ENCODE measurements at regions of chr5 and their contacts with region 1.

Region 1: DNA sequence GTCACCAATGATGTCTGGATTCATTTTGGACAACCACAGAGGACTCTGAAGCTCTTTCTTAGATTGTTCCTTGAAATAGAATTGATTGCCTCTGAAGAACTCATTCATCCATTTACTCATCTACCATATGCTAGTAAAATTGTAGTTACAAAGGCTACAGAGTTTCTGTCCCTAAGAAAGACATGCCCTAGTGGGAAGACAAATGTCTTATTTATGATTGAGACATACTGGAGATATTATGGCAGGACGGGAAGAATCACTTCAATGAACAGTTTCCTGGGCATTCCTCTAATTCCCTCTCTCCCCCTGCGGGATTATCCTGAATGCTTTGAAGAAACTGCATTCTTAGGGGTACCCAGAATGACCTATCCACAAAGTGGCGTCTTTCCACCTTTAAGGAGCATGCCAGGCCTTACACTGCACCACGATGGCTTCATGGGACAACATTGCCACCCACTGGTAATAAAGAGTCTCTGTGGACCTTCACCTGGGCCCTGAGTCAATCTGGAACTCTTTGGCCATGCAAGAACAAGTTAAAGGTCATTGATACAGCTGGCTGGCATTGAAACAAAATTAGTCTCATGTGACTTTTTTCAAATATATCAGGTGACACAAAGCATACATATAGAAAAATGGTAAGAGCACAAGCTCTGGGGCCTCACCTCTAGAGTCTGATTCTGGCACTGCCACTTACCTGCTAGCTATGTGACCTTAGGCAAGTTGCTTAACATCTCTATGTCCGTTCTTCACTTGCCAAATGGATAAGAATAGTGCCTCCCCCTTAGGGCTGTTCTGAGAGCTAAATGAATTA is 32.1 kb downstream of the ANKRD55 start:
- DNase-seq: peak; percentile 78
- ATAC-seq: peak; percentile 91
- H3K4me3 ChIP-seq: no peak overlapping the region
- H3K27ac ChIP-seq: no peak overlapping the region
- H3K4me1 ChIP-seq: peaks cover 2% of the 10 kb centered on the region; the same call in 1 of the 2 replicates
- H3K27me3 ChIP-seq: no peaks in the 10 kb centered on the region
- CTCF ChIP-seq: peak; percentile 83
- POLR2A ChIP-seq: no peak
- RAD21 ChIP-seq: peak; percentile 98

Region 2: GRCh38 chr5:55711968-55712859 is 488.8 kb before region 1 on chr5 and contains the start of gene SLC38A9:
- CTCF ChIA-PET with region 1: no interaction called
- POLR2A ChIA-PET with region 1: no interaction called
- dilution Hi-C with region 1: no loop called
- in situ Hi-C with region 1: no loop called
- intact Hi-C with region 1: loop called (anchors 10 kb)
- DNase-seq: peak; percentile 91
- ATAC-seq: peak; percentile 100
- H3K4me3 ChIP-seq: peak within 1 kb of the TSS; percentile 82
- H3K27ac ChIP-seq: peak within 1 kb of the TSS; percentile 81
- H3K4me1 ChIP-seq: peaks cover 2% of the 10 kb centered on the region; the same call in 1 of the 2 replicates
- H3K27me3 ChIP-seq: no peaks in the 10 kb centered on the region
- CTCF ChIP-seq: no peak
- POLR2A ChIP-seq: no peak
- RAD21 ChIP-seq: no peak; the same call in 1 of the 2 replicates
- total RNA-seq, gene SLC38A9: 20.8 and 24.2 TPM in 2 replicates

Region 3: GRCh38 chr5:55821731-55822512 is 379.1 kb before region 1 on chr5:
- CTCF ChIA-PET with region 1: no interaction called
- POLR2A ChIA-PET with region 1: no interaction called
- dilution Hi-C with region 1: no loop called
- in situ Hi-C with region 1: no loop called
- intact Hi-C with region 1: no loop called
- DNase-seq: no peak
- ATAC-seq: peak; percentile 35
- H3K4me3 ChIP-seq: no peak overlapping the region
- H3K27ac ChIP-seq: no peak overlapping the region
- H3K4me1 ChIP-seq: no peaks in the 10 kb centered on the region
- H3K27me3 ChIP-seq: peaks cover 28% of the 10 kb centered on the region
- CTCF ChIP-seq: no peak
- POLR2A ChIP-seq: no peak
- RAD21 ChIP-seq: no peak

Region 4: GRCh38 chr5:55982957-55983381 is 218.1 kb before region 1 on chr5:
- CTCF ChIA-PET with region 1: interaction called, 3 read pairs
- POLR2A ChIA-PET with region 1: no interaction called
- dilution Hi-C with region 1: no loop called
- in situ Hi-C with region 1: no loop called
- intact Hi-C with region 1: loop called (anchors 2 kb)
- DNase-seq: no peak
- ATAC-seq: no peak
- H3K4me3 ChIP-seq: no peak overlapping the region
- H3K27ac ChIP-seq: peak overlapping the region; percentile 29; the same call in 1 of the 2 replicates
- H3K4me1 ChIP-seq: peaks cover 6% of the 10 kb centered on the region
- H3K27me3 ChIP-seq: no peaks in the 10 kb centered on the region
- CTCF ChIP-seq: no peak
- POLR2A ChIP-seq: no peak
- RAD21 ChIP-seq: peak; percentile 29; the same call in 1 of the 2 replicates

Region 5: GRCh38 chr5:56123531-56124243 is 77.4 kb before region 1 on chr5:
- CTCF ChIA-PET with region 1: interaction called, 3 read pairs
- POLR2A ChIA-PET with region 1: no interaction called
- dilution Hi-C with region 1: no loop called
- in situ Hi-C with region 1: no loop called
- intact Hi-C with region 1: loop called (anchors 1 kb)
- DNase-seq: peak; percentile 100
- ATAC-seq: peak; percentile 90
- H3K4me3 ChIP-seq: no peak overlapping the region
- H3K27ac ChIP-seq: peak overlapping the region; percentile 65; the same call in 1 of the 2 replicates
- H3K4me1 ChIP-seq: peaks cover 16% of the 10 kb centered on the region
- H3K27me3 ChIP-seq: no peaks in the 10 kb centered on the region
- CTCF ChIP-seq: no peak
- POLR2A ChIP-seq: no peak
- RAD21 ChIP-seq: peak; percentile 25

Region 6: GRCh38 chr5:56829137-56829908 is 628.3 kb after region 1 on chr5:
- CTCF ChIA-PET with region 1: interaction called, 12 read pairs
- POLR2A ChIA-PET with region 1: no interaction called
- dilution Hi-C with region 1: no loop called
- in situ Hi-C with region 1: no loop called
- intact Hi-C with region 1: no loop called
- DNase-seq: peak; percentile 52
- ATAC-seq: no peak
- H3K4me3 ChIP-seq: no peak overlapping the region
- H3K27ac ChIP-seq: no peak overlapping the region
- H3K4me1 ChIP-seq: peaks cover 18% of the 10 kb centered on the region
- H3K27me3 ChIP-seq: no peaks in the 10 kb centered on the region
- CTCF ChIP-seq: no peak
- POLR2A ChIP-seq: no peak
- RAD21 ChIP-seq: no peak

Measured in IMR-90 (cell line).